Activated B cell treated with CpG ODN at 0.5 μM for 24 hours (primary cell): ENCODE measurements at regions of chr3 and their contacts with region 1.

Region 1: DNA sequence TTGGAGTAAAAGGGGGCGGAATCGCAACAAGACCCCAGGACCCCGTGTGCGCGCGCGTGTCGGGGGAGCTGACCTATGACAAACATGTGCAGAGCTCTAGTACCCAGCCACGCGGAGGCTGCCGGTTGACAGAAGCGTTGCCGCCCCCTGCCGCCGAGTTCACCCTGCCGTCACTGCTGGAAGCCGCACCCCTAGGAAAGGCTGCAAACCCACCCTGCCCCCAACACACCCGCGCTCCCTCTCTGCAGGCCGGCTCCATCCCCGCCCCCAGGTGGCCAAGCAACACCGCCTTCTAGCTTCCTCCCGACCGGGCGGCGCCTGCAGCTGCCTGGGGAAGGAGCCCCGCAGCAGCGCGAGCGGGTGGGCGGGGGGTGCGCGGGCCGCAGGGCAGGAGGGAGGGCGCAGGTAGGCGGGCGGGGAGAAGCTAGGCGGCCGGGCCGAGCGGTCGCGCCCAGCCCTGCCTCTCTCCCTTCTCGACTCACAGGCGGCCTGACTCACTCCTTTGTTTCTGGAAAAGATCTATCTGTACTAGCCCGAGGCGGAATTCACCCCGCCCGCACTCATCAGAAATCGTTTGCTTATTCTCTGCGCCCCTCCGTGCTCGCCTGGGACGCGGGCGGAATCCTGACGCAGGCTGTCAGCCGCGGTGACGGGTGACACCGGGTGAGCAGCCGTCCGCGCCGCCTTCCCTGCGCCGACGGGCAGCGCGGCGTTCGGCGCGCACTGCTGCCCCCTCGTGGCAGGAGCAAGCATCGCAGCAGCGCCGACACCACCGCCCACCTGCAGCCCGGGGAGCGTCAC is 160.8 kb downstream of the GAP43 start:
- DNase-seq: peak; percentile 86
- ATAC-seq: peak; percentile 87
- H3K4me3 Mint-ChIP-seq: peak overlapping the region; percentile 93
- H3K27ac Mint-ChIP-seq: peak overlapping the region; percentile 93
- H3K4me1 Mint-ChIP-seq: peaks cover 14% of the 10 kb centered on the region
- H3K27me3 Mint-ChIP-seq: peaks cover 8% of the 10 kb centered on the region
- CTCF ChIP-seq: peak; percentile 73

Region 2: GRCh38 chr3:114383875-114384557 is 1400.1 kb before region 1 on chr3:
- CTCF ChIA-PET with region 1: interaction called, 3 read pairs
- POLR2A ChIA-PET with region 1: no interaction called
- intact Hi-C with region 1: loop called (anchors 5 kb)
- DNase-seq: peak; percentile 40
- ATAC-seq: peak; percentile 98
- H3K4me3 Mint-ChIP-seq: no peak overlapping the region
- H3K27ac Mint-ChIP-seq: no peak overlapping the region
- H3K4me1 Mint-ChIP-seq: peaks cover 4% of the 10 kb centered on the region
- H3K27me3 Mint-ChIP-seq: no peaks in the 10 kb centered on the region
- CTCF ChIP-seq: peak; percentile 68

Region 3: DNA sequence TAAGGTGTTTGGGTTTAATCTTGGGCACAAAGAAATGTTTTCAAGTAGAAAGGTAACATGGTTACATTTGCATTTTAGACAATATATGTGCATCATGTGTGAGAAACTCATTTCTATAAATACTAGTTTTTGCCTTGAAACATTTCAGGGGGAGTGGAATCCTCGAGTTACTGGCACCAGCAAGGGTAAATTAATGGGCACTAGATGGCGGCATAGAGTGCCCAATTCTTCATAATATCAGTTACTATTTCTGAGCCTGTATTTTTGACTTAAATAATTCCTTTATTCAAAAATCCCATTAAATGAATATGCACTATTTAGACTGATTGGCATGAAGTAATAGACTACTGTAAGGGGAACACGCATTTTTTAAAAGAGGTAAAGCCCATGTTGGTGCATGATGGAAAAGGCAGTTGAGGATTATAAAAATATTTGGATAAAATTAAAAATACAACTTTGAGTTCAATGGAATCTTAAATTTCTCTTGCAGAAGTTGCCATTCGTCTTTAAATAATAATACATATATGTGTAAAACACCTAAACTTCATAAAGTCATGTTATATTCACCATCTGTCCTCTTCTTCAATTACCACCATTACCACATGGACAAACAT is 743.4 kb before region 1 on chr3:
- CTCF ChIA-PET with region 1: no interaction called
- POLR2A ChIA-PET with region 1: no interaction called
- intact Hi-C with region 1: loop called (anchors 1 kb)
- DNase-seq: no peak
- ATAC-seq: no peak
- H3K4me3 Mint-ChIP-seq: no peak overlapping the region
- H3K27ac Mint-ChIP-seq: no peak overlapping the region
- H3K4me1 Mint-ChIP-seq: no peaks in the 10 kb centered on the region
- H3K27me3 Mint-ChIP-seq: no peaks in the 10 kb centered on the region
- CTCF ChIP-seq: peak; percentile 24

Region 4: DNA sequence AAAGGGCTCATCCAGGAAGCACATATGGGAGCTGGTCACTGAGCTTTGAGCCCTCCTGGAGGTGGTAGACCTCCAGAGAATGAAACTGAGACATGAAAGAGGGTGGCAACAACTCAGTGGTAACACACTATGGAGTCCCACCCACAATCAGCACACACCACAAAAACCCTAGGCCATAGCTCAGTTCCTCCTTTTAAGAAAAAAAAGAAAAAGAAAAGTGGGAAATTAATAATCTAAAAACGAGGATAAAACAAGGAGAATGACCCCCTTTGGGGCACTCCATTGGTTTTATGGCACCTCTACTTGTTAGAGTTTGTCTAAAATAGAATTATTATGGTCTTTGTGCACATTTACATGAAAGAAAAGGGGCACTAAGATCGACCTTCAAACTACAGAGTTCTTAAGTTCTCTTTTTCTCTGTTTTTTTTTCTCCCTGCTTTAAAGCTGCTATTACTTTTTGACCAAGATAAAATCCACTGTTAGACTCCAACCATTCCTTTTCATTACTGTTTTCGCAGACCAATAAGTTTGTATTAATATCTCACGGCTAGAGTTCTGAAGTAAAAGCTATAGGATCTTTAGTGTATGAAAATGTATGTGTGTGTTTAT is 596.9 kb before region 1 on chr3:
- CTCF ChIA-PET with region 1: interaction called, 4 read pairs
- POLR2A ChIA-PET with region 1: interaction called, 4 read pairs
- intact Hi-C with region 1: loop called (anchors 1 kb)
- DNase-seq: no peak
- ATAC-seq: peak; percentile 99
- H3K4me3 Mint-ChIP-seq: peak overlapping the region; percentile 76
- H3K27ac Mint-ChIP-seq: peak overlapping the region; percentile 95
- H3K4me1 Mint-ChIP-seq: peaks cover 26% of the 10 kb centered on the region
- H3K27me3 Mint-ChIP-seq: no peaks in the 10 kb centered on the region
- CTCF ChIP-seq: no peak

Region 5: DNA sequence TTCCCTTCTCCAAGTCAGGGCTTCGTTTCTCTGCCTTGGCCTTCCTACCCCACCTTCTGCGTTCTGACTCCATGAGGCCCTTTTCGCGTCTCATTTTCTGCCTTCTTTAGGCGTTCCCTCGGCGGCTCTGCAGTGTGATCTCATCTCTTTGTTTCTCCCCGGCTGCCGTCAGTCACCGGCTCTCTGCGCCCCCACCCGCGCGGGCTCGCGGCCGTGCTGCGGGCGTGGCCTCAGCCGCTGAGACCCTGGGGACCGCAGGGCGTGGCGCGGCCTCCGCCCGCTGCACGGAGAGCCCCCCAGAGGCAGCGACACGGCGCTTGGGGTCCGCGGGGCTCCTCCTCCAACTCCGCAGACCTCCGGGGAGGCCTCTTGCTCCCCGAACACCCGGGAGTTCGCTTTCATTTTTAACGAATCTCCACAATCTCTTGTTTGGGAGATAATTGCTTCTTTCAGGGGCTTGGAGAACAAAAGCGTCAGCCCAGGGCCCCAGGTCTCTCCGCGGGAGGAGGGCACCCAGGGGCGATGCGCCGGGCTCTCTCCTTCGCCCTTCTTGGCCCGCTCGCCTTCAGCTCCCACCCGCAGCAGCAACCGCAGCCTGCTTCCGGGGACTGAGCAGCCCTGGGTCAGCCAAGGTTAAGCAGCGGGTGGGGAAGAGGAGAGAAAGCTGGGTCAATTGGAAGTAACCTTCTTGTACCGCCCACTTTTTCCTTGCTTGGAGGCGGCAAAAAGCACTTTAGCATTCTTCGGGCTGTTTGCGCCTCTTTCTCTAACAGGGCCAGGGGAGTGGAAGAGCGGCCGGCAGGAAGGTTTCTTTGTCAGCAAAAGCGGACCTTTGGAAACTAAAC is 125.6 kb before region 1 on chr3:
- CTCF ChIA-PET with region 1: no interaction called
- POLR2A ChIA-PET with region 1: interaction called, 5 read pairs
- intact Hi-C with region 1: loop called (anchors 1 kb)
- DNase-seq: peak; percentile 80
- ATAC-seq: peak; percentile 94
- H3K4me3 Mint-ChIP-seq: peak overlapping the region; percentile 94
- H3K27ac Mint-ChIP-seq: peak overlapping the region; percentile 99
- H3K4me1 Mint-ChIP-seq: peaks cover 45% of the 10 kb centered on the region
- H3K27me3 Mint-ChIP-seq: no peaks in the 10 kb centered on the region
- CTCF ChIP-seq: no peak

Region 6: GRCh38 chr3:115819785-115820384 is 35.7 kb after region 1 on chr3:
- CTCF ChIA-PET with region 1: interaction called, 5 read pairs
- POLR2A ChIA-PET with region 1: no interaction called
- intact Hi-C with region 1: loop called (anchors 1 kb)
- DNase-seq: no peak
- ATAC-seq: peak; percentile 90
- H3K4me3 Mint-ChIP-seq: no peak overlapping the region
- H3K27ac Mint-ChIP-seq: no peak overlapping the region
- H3K4me1 Mint-ChIP-seq: no peaks in the 10 kb centered on the region
- H3K27me3 Mint-ChIP-seq: no peaks in the 10 kb centered on the region
- CTCF ChIP-seq: peak; percentile 61